Right lobe of liver (tissue), 6 donors: ENCODE measurements at regions of chr10 and their contacts with region 1.

Region 1: GRCh38 chr10:95601116-95601719 is 40.0 kb upstream of the SORBS1 start:
- DNase-seq: peak; percentile 66 to 82 (median 75)
- ATAC-seq: peak; percentile 99
- H3K4me3 ChIP-seq: no peak overlapping the region
- H3K27ac ChIP-seq: no peak overlapping the region
- H3K4me1 ChIP-seq: no peaks in the 10 kb centered on the region
- H3K27me3 ChIP-seq: no peaks in the 10 kb centered on the region
- CTCF ChIP-seq: peak; percentile 93 to 96 (median 94)
- POLR2A ChIP-seq: no peak

Region 2: DNA sequence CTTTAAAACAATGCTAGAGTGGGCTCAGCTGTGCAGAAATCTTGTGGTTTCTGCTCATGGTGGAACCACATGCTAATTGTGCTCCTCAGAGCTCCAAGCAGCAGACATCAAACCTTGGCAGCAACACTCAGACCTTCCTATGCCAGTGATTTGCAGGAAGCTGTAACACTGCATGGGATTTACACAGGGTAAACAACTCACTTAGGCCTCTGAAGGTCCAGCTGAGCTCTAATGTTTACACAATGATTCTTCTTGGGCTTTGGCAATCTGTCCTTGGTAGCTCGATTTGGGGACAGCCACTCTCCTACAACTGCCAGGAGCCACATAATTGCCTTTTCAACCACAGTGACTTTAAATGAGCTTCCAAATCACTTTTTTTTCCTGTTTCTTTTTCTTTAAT is 212.7 kb before region 1 on chr10:
- intact Hi-C with region 1: loop called in 1 of 2 experiments (anchors 10 kb)
- DNase-seq: peak in 1 of 3 donors; percentile 65
- ATAC-seq: peak; percentile 80 to 93 (median 92)
- H3K4me3 ChIP-seq: no peak overlapping the region
- H3K27ac ChIP-seq: peak overlapping the region; percentile 13 to 62 (median 41)
- H3K4me1 ChIP-seq: peaks cover 0 to 32% (median 15%) of the 10 kb centered on the region in 4 donors
- H3K27me3 ChIP-seq: no peaks in the 10 kb centered on the region
- CTCF ChIP-seq: no peak
- POLR2A ChIP-seq: no peak